Ovary (tissue), 10 donors: ENCODE measurements at regions of chr21 and their contacts with region 1.

Region 1: GRCh38 chr21:31781737-31782136 is 49.8 kb upstream of the SCAF4 start:
- DNase-seq: peak in 4 of 5 donors; percentile 22 to 69 (median 33)
- H3K4me3 ChIP-seq: no peak overlapping the region
- H3K27ac ChIP-seq: no peak overlapping the region
- H3K4me1 ChIP-seq: peaks cover 6% of the 10 kb centered on the region
- H3K27me3 ChIP-seq: no peaks in the 10 kb centered on the region
- CTCF ChIP-seq: no peak
- EP300 ChIP-seq: no peak
- POLR2A ChIP-seq: no peak

Region 2: DNA sequence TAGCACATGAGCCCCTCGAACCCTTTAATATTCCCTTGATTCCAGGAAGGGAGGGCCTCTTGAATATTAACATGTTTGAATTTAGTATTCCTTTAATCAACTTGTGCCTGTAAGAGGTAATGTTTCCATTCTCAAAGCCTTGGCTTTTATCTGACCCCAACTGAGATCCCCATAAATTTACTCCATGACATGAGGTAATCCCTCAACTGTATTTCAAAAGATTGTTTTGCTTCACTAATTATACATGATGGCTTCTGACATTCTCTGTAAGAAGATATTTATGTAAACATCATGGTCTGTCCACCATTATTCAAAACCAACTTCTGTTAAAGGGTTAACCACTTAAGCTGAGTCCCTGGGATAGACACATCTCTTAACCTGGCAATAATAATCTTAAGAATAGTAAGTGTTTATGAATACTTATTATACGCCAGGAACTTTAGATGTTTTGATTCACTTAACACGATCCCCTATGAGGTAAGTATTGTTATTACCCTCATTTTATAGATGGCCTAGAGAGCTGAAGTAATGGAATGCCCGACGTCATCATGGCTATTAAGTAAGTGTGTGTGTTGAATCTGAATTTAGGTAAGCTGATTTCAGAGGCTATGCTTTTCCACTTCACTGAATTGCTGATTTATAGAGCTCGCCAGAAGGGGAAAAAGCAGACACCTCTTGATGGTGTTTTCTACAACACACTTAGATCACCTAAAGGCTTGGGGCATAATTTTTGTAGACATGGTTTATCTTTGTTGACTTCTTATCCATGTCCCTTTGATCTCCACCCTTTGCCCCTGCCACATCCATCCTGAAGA is 1312.6 kb before region 1 on chr21:
- intact Hi-C with region 1: no loop called
- DNase-seq: no peak
- H3K4me3 ChIP-seq: no peak overlapping the region
- H3K27ac ChIP-seq: no peak overlapping the region
- H3K4me1 ChIP-seq: no peaks in the 10 kb centered on the region
- H3K27me3 ChIP-seq: no peaks in the 10 kb centered on the region
- CTCF ChIP-seq: no peak
- EP300 ChIP-seq: no peak
- POLR2A ChIP-seq: no peak

Region 3: GRCh38 chr21:31161157-31161556 is 620.6 kb before region 1 on chr21:
- intact Hi-C with region 1: no loop called
- DNase-seq: no peak
- H3K4me3 ChIP-seq: no peak overlapping the region
- H3K27ac ChIP-seq: no peak overlapping the region
- H3K4me1 ChIP-seq: no peaks in the 10 kb centered on the region
- H3K27me3 ChIP-seq: no peaks in the 10 kb centered on the region
- CTCF ChIP-seq: no peak
- EP300 ChIP-seq: no peak
- POLR2A ChIP-seq: no peak

Region 4: GRCh38 chr21:31974454-31974985 is 192.8 kb after region 1 on chr21:
- intact Hi-C with region 1: no loop called
- DNase-seq: no peak
- H3K4me3 ChIP-seq: no peak overlapping the region
- H3K27ac ChIP-seq: no peak overlapping the region
- H3K4me1 ChIP-seq: no peaks in the 10 kb centered on the region
- H3K27me3 ChIP-seq: no peaks in the 10 kb centered on the region
- CTCF ChIP-seq: no peak
- EP300 ChIP-seq: no peak
- POLR2A ChIP-seq: no peak

Region 5: GRCh38 chr21:32597205-32597604 is 815.5 kb after region 1 on chr21:
- intact Hi-C with region 1: loop called in 1 of 4 experiments (anchors 10 kb)
- DNase-seq: no peak
- H3K4me3 ChIP-seq: no peak overlapping the region
- H3K27ac ChIP-seq: no peak overlapping the region
- H3K4me1 ChIP-seq: no peaks in the 10 kb centered on the region
- H3K27me3 ChIP-seq: no peaks in the 10 kb centered on the region
- CTCF ChIP-seq: no peak
- EP300 ChIP-seq: no peak
- POLR2A ChIP-seq: no peak